Vagina (tissue), 2 donors: ENCODE measurements at regions of chr16 and their contacts with region 1.

Region 1: DNA sequence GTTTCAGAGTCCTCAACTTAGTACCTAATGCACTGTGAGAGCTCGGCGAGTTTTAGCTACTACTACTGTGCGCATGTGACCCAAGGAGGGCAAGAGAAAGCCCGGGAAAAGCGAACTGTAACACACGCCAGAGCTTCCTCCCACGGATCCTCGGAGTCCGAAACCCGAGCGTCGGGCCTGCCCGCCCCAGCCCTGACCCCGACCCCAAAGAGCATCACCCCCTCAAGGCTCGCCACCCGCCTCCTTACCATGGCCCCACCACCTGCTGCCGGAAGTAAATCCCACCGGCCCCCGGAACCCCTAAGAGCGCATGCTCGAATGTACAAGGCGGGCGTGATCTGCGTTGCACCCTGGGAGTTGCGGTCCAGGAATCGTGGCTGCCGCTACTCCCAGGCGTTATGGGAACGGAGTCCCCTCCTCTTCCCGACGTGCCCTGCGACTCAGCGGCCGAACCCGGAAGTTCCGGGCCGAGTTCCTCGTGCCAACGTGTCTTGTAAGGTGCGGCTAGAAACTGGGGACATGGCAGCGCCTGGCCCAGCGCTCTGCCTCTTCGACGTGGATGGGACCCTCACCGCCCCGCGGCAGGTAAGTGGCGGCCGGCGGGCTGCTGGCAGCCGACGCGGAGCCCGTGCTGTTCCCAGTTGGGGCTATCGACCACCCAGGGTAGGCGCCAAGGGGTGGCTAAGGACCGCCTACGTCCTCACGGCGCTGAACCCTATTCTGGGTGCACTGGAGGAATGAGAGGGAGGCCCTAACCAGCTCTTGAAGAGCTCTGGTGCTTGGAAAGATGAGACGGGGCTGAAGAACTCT is at the starts of genes PMM2 and TMEM186:
- DNase-seq: peak; percentile 97 to 98
- H3K4me3 ChIP-seq: peak within 1 kb of the TSS; percentile 95 to 98
- H3K27ac ChIP-seq: peak within 1 kb of the TSS; percentile 59
- H3K4me1 ChIP-seq: peaks cover 45% of the 10 kb centered on the region
- H3K27me3 ChIP-seq: no peaks in the 10 kb centered on the region
- CTCF ChIP-seq: peak in 1 of 3 experiments; percentile 8
- POLR2A ChIP-seq: peak in 1 of 2 donors; percentile 4
- total RNA-seq, gene PMM2: 21.4 TPM
- total RNA-seq, gene TMEM186: 2.9 TPM

Region 2: DNA sequence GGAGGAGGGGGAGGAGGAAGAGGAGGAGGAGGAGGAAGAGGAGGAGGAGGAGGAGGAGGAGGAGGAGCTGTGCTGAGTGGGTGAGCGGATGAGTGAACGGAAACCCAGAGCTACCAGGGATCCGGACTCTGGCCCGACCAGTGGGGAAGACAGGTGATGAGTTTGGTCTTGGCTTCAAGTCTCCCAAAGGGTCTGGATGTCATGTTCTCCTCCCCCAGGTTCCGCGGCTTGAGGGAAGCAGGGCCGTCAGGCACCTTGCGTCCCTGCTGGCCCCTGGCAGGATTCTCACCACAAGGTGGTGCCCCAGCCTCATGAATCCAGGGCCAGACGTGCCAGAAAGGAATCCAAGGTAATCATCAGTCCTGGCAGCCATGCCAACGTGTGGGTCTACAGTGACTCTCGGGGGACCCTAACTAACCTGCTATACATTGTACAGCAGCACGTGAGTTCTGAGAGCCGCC is 136.7 kb before region 1 on chr16:
- intact Hi-C with region 1: loop called (anchors 10 kb)
- DNase-seq: no peak
- H3K4me3 ChIP-seq: no peak overlapping the region
- H3K27ac ChIP-seq: no peak overlapping the region
- H3K4me1 ChIP-seq: no peaks in the 10 kb centered on the region
- H3K27me3 ChIP-seq: no peaks in the 10 kb centered on the region
- CTCF ChIP-seq: peak; percentile 30 to 52 (median 36)
- POLR2A ChIP-seq: no peak

Region 3: GRCh38 chr16:8868416-8869211 is 71.0 kb after region 1 on chr16 and contains the start of gene CARHSP1:
- intact Hi-C with region 1: loop called (anchors 2 kb)
- DNase-seq: no peak
- H3K4me3 ChIP-seq: peak within 1 kb of the TSS; percentile 63 to 64
- H3K27ac ChIP-seq: peak within 1 kb of the TSS; percentile 86
- H3K4me1 ChIP-seq: peaks cover 51% of the 10 kb centered on the region
- H3K27me3 ChIP-seq: no peaks in the 10 kb centered on the region
- CTCF ChIP-seq: no peak
- POLR2A ChIP-seq: peak in 1 of 2 donors; percentile 81
- total RNA-seq, gene CARHSP1: 125 TPM

Region 4: GRCh38 chr16:8899709-8900317 is 102.2 kb after region 1 on chr16:
- intact Hi-C with region 1: no loop called
- DNase-seq: no peak
- H3K4me3 ChIP-seq: no peak overlapping the region
- H3K27ac ChIP-seq: no peak overlapping the region
- H3K4me1 ChIP-seq: no peaks in the 10 kb centered on the region
- H3K27me3 ChIP-seq: no peaks in the 10 kb centered on the region
- CTCF ChIP-seq: no peak
- POLR2A ChIP-seq: no peak

Region 5: GRCh38 chr16:10314811-10315210 is 1517.2 kb after region 1 on chr16:
- intact Hi-C with region 1: no loop called
- DNase-seq: no peak
- H3K4me3 ChIP-seq: no peak overlapping the region
- H3K27ac ChIP-seq: no peak overlapping the region
- H3K4me1 ChIP-seq: no peaks in the 10 kb centered on the region
- H3K27me3 ChIP-seq: no peaks in the 10 kb centered on the region
- CTCF ChIP-seq: no peak
- POLR2A ChIP-seq: no peak